Activated B cell treated with CpG ODN at 0.5 μM for 24 hours (primary cell): ENCODE measurements at regions of chr11 and their contacts with region 1.

Region 1: GRCh38 chr11:113974741-113975470 is at the start of gene HTR3A:
- DNase-seq: no peak
- ATAC-seq: no peak
- H3K4me3 Mint-ChIP-seq: peak within 1 kb of the TSS; percentile 42
- H3K27ac Mint-ChIP-seq: peak within 1 kb of the TSS; percentile 50
- H3K4me1 Mint-ChIP-seq: peaks cover 64% of the 10 kb centered on the region
- H3K27me3 Mint-ChIP-seq: no peaks in the 10 kb centered on the region
- CTCF ChIP-seq: no peak
- total RNA-seq, gene HTR3A: 15.3 and 15.6 TPM in 2 replicates

Region 2: GRCh38 chr11:113839842-113840241 is 135.1 kb before region 1 on chr11:
- CTCF ChIA-PET with region 1: no interaction called
- POLR2A ChIA-PET with region 1: no interaction called
- intact Hi-C with region 1: loop called (anchors 2 kb)
- DNase-seq: peak; percentile 30
- ATAC-seq: peak; percentile 91
- H3K4me3 Mint-ChIP-seq: peak overlapping the region; percentile 66
- H3K27ac Mint-ChIP-seq: no peak overlapping the region
- H3K4me1 Mint-ChIP-seq: peaks cover 37% of the 10 kb centered on the region
- H3K27me3 Mint-ChIP-seq: no peaks in the 10 kb centered on the region
- CTCF ChIP-seq: no peak

Region 3: GRCh38 chr11:113947994-113948393 is 26.9 kb before region 1 on chr11:
- CTCF ChIA-PET with region 1: no interaction called
- POLR2A ChIA-PET with region 1: interaction called, 10 read pairs
- intact Hi-C with region 1: loop called (anchors 2 kb)
- DNase-seq: no peak
- ATAC-seq: peak; percentile 42
- H3K4me3 Mint-ChIP-seq: peak overlapping the region; percentile 56
- H3K27ac Mint-ChIP-seq: peak overlapping the region; percentile 70
- H3K4me1 Mint-ChIP-seq: peaks cover 33% of the 10 kb centered on the region
- H3K27me3 Mint-ChIP-seq: peaks cover 7% of the 10 kb centered on the region
- CTCF ChIP-seq: no peak

Region 4: DNA sequence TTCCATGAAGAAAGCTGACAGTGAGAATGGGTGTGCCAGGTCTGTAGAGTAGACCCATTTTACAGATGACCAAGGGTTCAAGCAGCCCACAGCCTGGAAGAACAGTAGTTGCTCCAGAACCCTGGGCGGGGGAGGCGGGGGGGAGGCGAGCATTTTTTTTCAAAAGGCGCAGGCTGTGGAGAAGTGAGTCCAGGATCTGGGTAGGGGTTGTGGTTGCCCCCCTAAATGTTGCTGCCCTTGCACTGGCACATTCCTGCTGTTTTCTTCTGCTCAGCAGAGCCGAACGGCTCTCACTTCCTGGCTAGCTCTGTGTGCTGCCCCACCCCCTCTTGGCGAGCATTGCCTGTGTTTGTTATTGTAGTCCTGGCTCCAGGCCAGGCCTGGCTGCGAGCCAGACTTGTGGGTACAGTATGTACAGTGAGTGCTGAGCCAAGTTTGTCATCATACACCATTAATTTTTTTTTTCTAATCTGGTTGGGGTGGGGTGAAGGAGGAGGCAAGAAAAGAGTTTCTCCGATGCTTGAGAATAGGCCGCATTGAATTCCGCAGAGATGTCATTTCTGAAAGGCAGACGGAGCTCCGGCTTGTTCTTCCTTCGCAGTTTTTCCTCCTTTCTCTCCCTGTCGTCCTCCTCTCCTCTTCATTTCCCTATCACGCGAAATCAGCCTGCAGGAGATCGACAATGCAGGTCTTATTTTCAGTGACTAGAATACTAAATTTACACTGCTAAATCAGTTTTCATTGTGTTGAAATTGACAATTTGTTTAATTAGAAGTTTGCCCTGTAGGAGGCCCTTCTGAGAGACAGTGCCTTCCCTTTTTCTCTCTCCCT is 185.1 kb after region 1 on chr11:
- CTCF ChIA-PET with region 1: no interaction called
- POLR2A ChIA-PET with region 1: interaction called, 8 read pairs
- intact Hi-C with region 1: loop called (anchors 2 kb)
- DNase-seq: peak; percentile 79
- ATAC-seq: peak; percentile 95
- H3K4me3 Mint-ChIP-seq: peak overlapping the region; percentile 62
- H3K27ac Mint-ChIP-seq: peak overlapping the region; percentile 82
- H3K4me1 Mint-ChIP-seq: peaks cover 72% of the 10 kb centered on the region
- H3K27me3 Mint-ChIP-seq: no peaks in the 10 kb centered on the region
- CTCF ChIP-seq: no peak

Region 5: GRCh38 chr11:114257621-114258558 is 283.0 kb after region 1 on chr11:
- CTCF ChIA-PET with region 1: interaction called, 21 read pairs
- POLR2A ChIA-PET with region 1: interaction called, 16 read pairs
- intact Hi-C with region 1: loop called (anchors 5 kb)
- DNase-seq: no peak
- ATAC-seq: no peak
- H3K4me3 Mint-ChIP-seq: peak overlapping the region; percentile 55
- H3K27ac Mint-ChIP-seq: peak overlapping the region; percentile 89
- H3K4me1 Mint-ChIP-seq: peaks cover 31% of the 10 kb centered on the region
- H3K27me3 Mint-ChIP-seq: no peaks in the 10 kb centered on the region
- CTCF ChIP-seq: no peak